Activated B cell treated with CpG ODN at 0.5 μM for 24 hours (primary cell): ENCODE measurements at regions of chr14 and their contacts with region 1.

Region 1: GRCh38 chr14:89787525-89787924 is 167.0 kb downstream of the EFCAB11 start:
- DNase-seq: no peak
- ATAC-seq: no peak
- H3K4me3 Mint-ChIP-seq: no peak overlapping the region
- H3K27ac Mint-ChIP-seq: no peak overlapping the region
- H3K4me1 Mint-ChIP-seq: no peaks in the 10 kb centered on the region
- H3K27me3 Mint-ChIP-seq: no peaks in the 10 kb centered on the region
- CTCF ChIP-seq: no peak

Region 2: DNA sequence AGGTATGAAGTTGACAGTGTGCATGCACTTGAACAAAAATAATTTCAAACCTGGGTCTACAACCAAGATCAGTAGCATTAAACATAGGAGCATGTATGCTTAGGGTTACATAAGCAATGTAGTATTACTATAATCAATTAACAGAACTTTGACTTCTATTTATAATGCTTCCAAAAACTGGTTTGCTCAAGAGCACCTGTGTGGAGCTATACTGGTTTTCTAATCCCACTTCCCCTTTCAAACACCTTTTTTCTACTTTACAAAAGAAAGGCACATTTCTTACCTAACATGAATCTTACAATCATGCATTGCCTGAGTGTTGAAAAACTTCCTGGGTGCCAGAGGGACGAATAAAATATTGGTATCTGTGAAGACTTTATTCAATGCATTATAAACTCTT is 94.3 kb after region 1 on chr14:
- CTCF ChIA-PET with region 1: no interaction called
- POLR2A ChIA-PET with region 1: no interaction called
- intact Hi-C with region 1: loop called (anchors 10 kb)
- DNase-seq: no peak
- ATAC-seq: no peak
- H3K4me3 Mint-ChIP-seq: no peak overlapping the region
- H3K27ac Mint-ChIP-seq: no peak overlapping the region
- H3K4me1 Mint-ChIP-seq: peaks cover 7% of the 10 kb centered on the region
- H3K27me3 Mint-ChIP-seq: no peaks in the 10 kb centered on the region
- CTCF ChIP-seq: no peak